BJ (cell line): ENCODE measurements at regions of chr2 and their contacts with region 1.

Region 1: DNA sequence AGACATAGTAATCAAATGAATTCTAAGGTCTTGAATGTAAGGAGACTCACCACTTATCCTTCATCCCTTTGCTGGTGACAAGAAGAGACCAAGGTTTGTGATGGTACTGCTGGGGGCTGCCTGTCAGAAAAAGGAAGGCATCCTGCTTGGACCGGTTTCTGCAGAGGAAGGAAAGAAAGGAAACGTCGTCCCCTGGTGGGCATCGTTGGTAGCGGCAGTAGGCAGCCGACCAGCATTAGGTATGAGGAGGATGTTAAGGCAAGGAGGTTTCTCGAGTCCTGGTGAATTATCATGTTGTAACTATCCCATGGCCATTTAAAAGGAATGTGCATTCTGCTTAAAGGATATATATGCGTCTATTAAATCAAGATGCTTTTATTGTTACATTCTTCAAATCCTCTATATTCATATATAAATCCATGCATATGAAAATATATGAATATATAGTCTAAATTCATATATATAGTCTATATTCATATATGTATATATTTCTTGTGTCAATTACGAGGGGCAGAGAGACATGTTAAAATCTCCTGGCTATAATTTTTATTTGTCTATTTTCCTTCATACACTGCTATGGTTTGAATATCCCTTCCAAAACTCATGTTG is 94.4 kb upstream of the TGFA start:
- DNase-seq: peak; percentile 3
- H3K4me3 ChIP-seq: no peak overlapping the region
- H3K27me3 ChIP-seq: no peaks in the 10 kb centered on the region
- CTCF ChIP-seq: peak; percentile 100

Region 2: GRCh38 chr2:70312560-70312959 is 335.4 kb before region 1 on chr2:
- CTCF ChIA-PET with region 1: interaction called, 10 read pairs
- POLR2A ChIA-PET with region 1: no interaction called
- DNase-seq: no peak
- H3K4me3 ChIP-seq: no peak overlapping the region
- H3K27me3 ChIP-seq: peaks cover 4% of the 10 kb centered on the region
- CTCF ChIP-seq: no peak

Region 3: GRCh38 chr2:70425687-70426301 is 222.2 kb before region 1 on chr2:
- CTCF ChIA-PET with region 1: no interaction called
- POLR2A ChIA-PET with region 1: no interaction called
- DNase-seq: no peak
- H3K4me3 ChIP-seq: no peak overlapping the region
- H3K27me3 ChIP-seq: peaks cover 2% of the 10 kb centered on the region; the same call in 1 of the 2 replicates
- CTCF ChIP-seq: no peak

Region 4: DNA sequence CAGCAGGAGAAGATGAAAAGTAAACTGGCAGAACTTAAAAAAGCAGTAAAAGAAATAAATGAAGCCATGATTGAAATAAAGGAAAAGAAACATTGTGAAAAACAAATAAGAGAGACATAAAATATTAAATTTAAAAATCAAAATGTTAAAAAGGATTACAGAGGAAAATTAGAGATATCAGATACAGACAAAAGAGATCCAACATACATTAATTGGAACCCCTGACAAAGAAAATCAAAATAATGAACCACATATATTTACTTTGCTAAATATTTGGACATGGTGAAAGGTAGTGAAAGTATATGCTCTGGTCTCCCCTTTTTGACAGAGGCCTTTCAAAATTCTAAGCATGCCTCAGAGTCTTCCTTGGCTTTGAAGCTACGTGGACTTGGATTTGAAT is 14.5 kb before region 1 on chr2:
- CTCF ChIA-PET with region 1: interaction called, 26 read pairs
- POLR2A ChIA-PET with region 1: no interaction called
- DNase-seq: no peak
- H3K4me3 ChIP-seq: no peak overlapping the region
- H3K27me3 ChIP-seq: peaks cover 3% of the 10 kb centered on the region
- CTCF ChIP-seq: no peak